ENCODE measurements at regions of chr14 and their contacts with region 1.

Region 1: DNA sequence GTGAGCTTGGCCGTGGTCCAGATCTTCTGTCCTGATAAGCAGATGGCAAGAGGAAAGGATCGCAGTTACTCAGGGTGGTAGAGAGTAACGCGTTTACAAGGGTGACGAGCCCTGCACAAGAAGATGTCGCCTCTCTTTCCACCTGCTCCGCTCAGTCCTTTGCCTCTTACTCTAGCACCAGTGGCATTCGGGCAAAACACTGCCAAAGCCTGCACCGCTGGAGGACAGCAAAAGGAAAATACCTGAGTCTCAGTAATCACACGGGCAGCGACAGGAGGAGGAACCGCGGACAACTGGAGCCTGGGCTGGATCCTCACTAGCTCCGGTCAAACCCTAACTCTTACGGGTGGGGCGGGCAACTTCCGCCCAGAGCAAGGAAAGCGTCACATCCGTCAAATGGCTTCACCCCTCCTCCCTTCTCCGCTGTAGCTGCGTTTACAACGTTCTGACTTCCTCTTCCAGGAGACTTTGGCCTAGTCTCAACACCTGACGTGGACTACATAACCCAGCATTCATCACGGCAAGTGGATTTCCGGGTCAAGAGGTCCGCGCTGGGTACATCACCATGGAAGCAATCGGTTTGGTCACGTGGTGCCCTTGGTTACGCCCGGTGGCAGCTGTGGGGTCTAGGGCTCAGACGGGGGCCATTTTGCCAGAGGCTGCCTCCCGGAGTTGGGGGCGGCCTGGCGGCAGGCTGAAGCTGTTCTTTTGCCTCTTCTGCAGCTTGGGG is at the starts of genes KLHL28 and TOGARAM1:
- DNase-seq: peak; percentile 79 to 100 (median 96)
- ATAC-seq: peak; percentile 95
- H3K4me3 ChIP-seq: peak within 1 kb of the TSS; percentile 99
- H3K4me3 Mint-ChIP-seq: no peak within 1 kb of the TSS
- H3K27ac ChIP-seq: peak within 1 kb of the TSS; percentile 91
- H3K27ac Mint-ChIP-seq: peak within 1 kb of the TSS in 1 of 9 donors; percentile 40
- H3K4me1 ChIP-seq: peaks cover 32 to 50% of the 10 kb centered on the region in 2 donors
- H3K4me1 Mint-ChIP-seq: peaks cover 33 to 68% (median 54%) of the 10 kb centered on the region in 7 donors
- H3K27me3 ChIP-seq: no peaks in the 10 kb centered on the region
- H3K27me3 Mint-ChIP-seq: no peaks in the 10 kb centered on the region
- total RNA-seq, gene KLHL28: 22.1 to 50.2 (median 41.4) TPM
- total RNA-seq, gene TOGARAM1: 11.0 to 17.5 (median 15.0) TPM

Region 2: GRCh38 chr14:44912041-44912869 is 49.5 kb before region 1 on chr14:
- CTCF ChIA-PET with region 1: no interaction called
- POLR2A ChIA-PET with region 1: interaction called, 7 read pairs
- intact Hi-C with region 1: loop called in 1 of 2 experiments (anchors 5 kb)
- DNase-seq: peak in 1 of 9 donors; percentile 10
- ATAC-seq: no peak
- H3K4me3 ChIP-seq: no peak overlapping the region
- H3K4me3 Mint-ChIP-seq: peak overlapping the region in 9 of 10 donors; percentile 26 to 72 (median 52)
- H3K27ac ChIP-seq: no peak overlapping the region
- H3K27ac Mint-ChIP-seq: no peak overlapping the region
- H3K4me1 ChIP-seq: no peaks in the 10 kb centered on the region
- H3K4me1 Mint-ChIP-seq: peaks cover 0 to 16% (median 12%) of the 10 kb centered on the region in 7 donors
- H3K27me3 ChIP-seq: peaks cover 9 to 16% of the 10 kb centered on the region in 2 donors
- H3K27me3 Mint-ChIP-seq: peaks cover 31 to 42% (median 38%) of the 10 kb centered on the region in 5 donors

Region 3: DNA sequence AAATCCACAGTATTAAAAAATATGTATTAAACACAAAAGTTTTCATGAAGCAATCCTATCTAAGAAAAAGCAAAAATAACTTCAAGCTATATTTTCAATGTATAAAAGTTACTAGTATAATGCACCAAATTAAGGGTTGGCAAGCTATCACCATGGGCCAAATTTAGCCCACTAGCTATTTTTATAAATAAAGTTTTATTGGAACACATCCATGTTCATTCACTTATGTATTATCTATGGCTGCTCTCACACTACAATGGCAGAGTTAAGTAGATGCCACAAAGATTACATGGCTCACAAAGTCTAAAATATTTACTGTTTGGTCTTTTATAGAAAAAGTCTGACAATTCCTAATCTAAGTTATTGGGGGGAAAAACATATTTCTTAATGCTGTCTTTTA is 17.7 kb before region 1 on chr14:
- CTCF ChIA-PET with region 1: interaction called, 3 read pairs
- POLR2A ChIA-PET with region 1: interaction called, 4 read pairs
- intact Hi-C with region 1: loop called in 1 of 2 experiments (anchors 1 kb)
- DNase-seq: no peak
- ATAC-seq: no peak
- H3K4me3 ChIP-seq: no peak overlapping the region
- H3K4me3 Mint-ChIP-seq: peak overlapping the region in 1 of 10 donors; percentile 11
- H3K27ac ChIP-seq: no peak overlapping the region
- H3K27ac Mint-ChIP-seq: no peak overlapping the region
- H3K4me1 ChIP-seq: peaks cover 0 to 15% of the 10 kb centered on the region in 2 donors
- H3K4me1 Mint-ChIP-seq: peaks cover 14 to 76% (median 65%) of the 10 kb centered on the region in 7 donors
- H3K27me3 ChIP-seq: no peaks in the 10 kb centered on the region
- H3K27me3 Mint-ChIP-seq: no peaks in the 10 kb centered on the region

Region 4: DNA sequence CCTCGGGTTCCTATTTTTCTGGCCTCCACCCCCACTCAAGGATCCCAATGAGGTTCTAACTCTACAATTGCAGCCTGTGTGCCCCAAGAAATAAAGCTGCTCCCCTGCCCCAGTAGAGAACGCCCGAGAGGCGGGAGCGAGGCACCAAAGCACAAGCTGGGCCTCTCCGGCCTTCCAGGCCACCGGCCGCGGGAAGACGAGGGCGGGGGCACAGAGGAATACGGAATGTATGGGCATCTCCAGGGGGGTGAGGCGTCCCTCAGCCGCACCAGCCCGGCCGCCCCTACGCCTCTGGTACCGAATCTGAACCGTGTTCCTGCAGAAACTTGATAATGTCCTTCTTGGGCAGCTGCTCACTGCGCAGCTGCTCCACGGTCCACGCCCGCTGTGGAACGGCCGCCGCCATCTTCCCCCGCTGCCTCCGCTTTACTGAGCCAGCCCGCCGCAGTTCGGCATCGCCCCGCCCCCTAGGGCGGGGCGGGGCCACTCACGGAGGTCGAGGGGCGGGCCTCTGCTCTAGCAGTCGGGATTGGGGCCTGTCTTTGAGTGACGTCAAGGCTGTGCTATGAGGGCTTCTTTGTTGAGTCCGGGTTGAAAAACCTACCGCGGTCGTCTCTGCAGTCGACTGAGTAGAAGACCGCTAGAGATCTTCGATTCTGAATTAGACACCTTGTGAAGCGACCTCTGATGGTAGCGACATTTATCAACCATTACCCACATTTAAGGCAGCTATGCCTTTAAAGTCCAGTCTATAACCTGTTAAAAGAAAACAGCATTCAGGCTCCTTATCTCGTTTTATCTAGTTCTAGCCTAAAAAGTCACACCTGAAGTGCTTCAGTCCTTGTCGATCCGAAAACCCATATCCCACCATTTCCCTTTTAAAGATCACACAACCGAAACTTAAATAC is 172.5 kb after region 1 on chr14 and contains the start of gene FKBP3:
- CTCF ChIA-PET with region 1: interaction called, 3 read pairs
- POLR2A ChIA-PET with region 1: interaction called, 64 read pairs
- intact Hi-C with region 1: loop called (anchors 1 kb)
- DNase-seq: peak; percentile 80 to 99 (median 94)
- ATAC-seq: peak; percentile 97
- H3K4me3 ChIP-seq: peak within 1 kb of the TSS; percentile 97
- H3K4me3 Mint-ChIP-seq: peak within 1 kb of the TSS; percentile 93 to 99 (median 96)
- H3K27ac ChIP-seq: peak within 1 kb of the TSS; percentile 89
- H3K27ac Mint-ChIP-seq: peak within 1 kb of the TSS; percentile 95 to 99 (median 98)
- H3K4me1 ChIP-seq: peaks cover 11 to 19% of the 10 kb centered on the region in 2 donors
- H3K4me1 Mint-ChIP-seq: peaks cover 21 to 70% (median 50%) of the 10 kb centered on the region in 7 donors
- H3K27me3 ChIP-seq: no peaks in the 10 kb centered on the region
- H3K27me3 Mint-ChIP-seq: no peaks in the 10 kb centered on the region
- total RNA-seq, gene FKBP3: 31.7 to 66.2 (median 55.4) TPM

Region 5: GRCh38 chr14:45267071-45267470 is 305.3 kb after region 1 on chr14:
- CTCF ChIA-PET with region 1: interaction called, 3 read pairs
- POLR2A ChIA-PET with region 1: no interaction called
- intact Hi-C with region 1: loop called in 1 of 2 experiments (anchors 1 kb)
- DNase-seq: no peak
- ATAC-seq: no peak
- H3K4me3 ChIP-seq: no peak overlapping the region
- H3K4me3 Mint-ChIP-seq: no peak overlapping the region
- H3K27ac ChIP-seq: no peak overlapping the region
- H3K27ac Mint-ChIP-seq: peak overlapping the region in 1 of 9 donors; percentile 63
- H3K4me1 ChIP-seq: no peaks in the 10 kb centered on the region
- H3K4me1 Mint-ChIP-seq: no peaks in the 10 kb centered on the region
- H3K27me3 ChIP-seq: no peaks in the 10 kb centered on the region
- H3K27me3 Mint-ChIP-seq: peaks cover 4 to 19% (median 10%) of the 10 kb centered on the region in 5 donors